H1 (cell line): ENCODE measurements at regions of chr15 and their contacts with region 1.

Region 1: DNA sequence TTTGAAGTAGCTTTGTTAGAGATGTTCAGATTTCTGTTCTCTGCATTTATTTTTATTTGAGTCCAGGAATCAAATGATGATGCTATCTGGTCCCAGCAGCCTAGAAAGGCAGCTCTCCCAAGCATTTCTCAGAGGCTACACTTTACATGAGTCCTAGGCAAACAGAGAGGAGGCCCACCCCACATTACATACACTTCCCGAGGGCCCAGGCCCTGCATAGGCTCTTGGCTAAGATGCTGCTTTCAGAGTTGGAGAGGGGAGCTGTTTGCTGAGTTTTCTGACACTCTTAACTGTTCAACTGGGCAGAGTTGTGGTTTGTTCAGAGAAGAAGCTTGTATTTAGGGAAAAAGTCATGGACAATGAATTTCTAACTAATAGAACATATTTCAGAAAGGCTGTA is 117.9 kb upstream of the RGMA start:
- DNase-seq: peak in 1 of 2 experiments; percentile 16
- H3K4me3 ChIP-seq: no peak overlapping the region
- H3K27ac ChIP-seq: no peak overlapping the region
- H3K4me1 ChIP-seq: peaks cover 0 to 4% (median 0%) of the 10 kb centered on the region in 4 experiments; a peak in 2 of 7 replicates
- H3K27me3 ChIP-seq: no peaks in the 10 kb centered on the region; a peak in 1 of 7 replicates
- CTCF ChIP-seq: no peak
- EP300 ChIP-seq: no peak
- POLR2A ChIP-seq: no peak
- RAD21 ChIP-seq: no peak

Region 2: DNA sequence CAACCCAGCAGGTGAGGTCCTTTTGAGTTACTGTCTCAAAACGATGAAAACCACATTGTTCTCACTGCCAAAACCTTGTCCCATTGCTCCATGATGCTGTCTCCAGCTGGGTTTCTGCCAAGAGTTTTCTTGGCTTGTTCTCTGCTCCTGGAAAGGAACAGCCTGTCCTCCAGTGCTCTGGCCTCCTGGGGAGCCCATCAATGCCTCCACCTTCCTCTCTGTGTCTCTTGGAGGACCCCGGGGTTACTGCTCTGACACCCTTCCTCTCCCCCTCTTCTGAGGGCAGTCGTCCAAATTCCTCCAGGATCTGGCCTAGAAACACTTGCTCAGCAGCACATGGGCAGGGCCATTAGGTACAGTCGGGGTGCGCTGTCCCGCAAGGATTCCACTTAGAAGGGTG is 53.9 kb before region 1 on chr15:
- CTCF ChIA-PET with region 1: no interaction called
- POLR2A ChIA-PET with region 1: no interaction called
- DNase-seq: no peak
- H3K4me3 ChIP-seq: no peak overlapping the region
- H3K27ac ChIP-seq: no peak overlapping the region
- H3K4me1 ChIP-seq: peaks cover 4 to 13% (median 8%) of the 10 kb centered on the region in 4 experiments; a peak in 5 of 7 replicates
- H3K27me3 ChIP-seq: no peaks in the 10 kb centered on the region
- CTCF ChIP-seq: no peak
- EP300 ChIP-seq: no peak
- POLR2A ChIP-seq: no peak
- RAD21 ChIP-seq: 0 out of 4 replicates have a peak, but pooled peaks of 1 of the 2 experiments have one; percentile 7

Region 3: GRCh38 chr15:93189561-93189960 is 17.3 kb before region 1 on chr15:
- CTCF ChIA-PET with region 1: no interaction called
- POLR2A ChIA-PET with region 1: no interaction called
- DNase-seq: no peak
- H3K4me3 ChIP-seq: peak overlapping the region in 1 of 4 experiments; percentile 37; a peak in 2 of 8 replicates
- H3K27ac ChIP-seq: no peak overlapping the region
- H3K4me1 ChIP-seq: peaks cover 0 to 14% (median 7%) of the 10 kb centered on the region in 4 experiments; a peak in 5 of 7 replicates
- H3K27me3 ChIP-seq: 0 out of 7 replicates have a peak, but pooled peaks cover 0 to 2% (median 0%) of the 10 kb centered on the region in 4 experiments
- CTCF ChIP-seq: no peak
- EP300 ChIP-seq: no peak
- POLR2A ChIP-seq: no peak
- RAD21 ChIP-seq: no peak

Region 4: GRCh38 chr15:93221759-93222158 is 14.9 kb after region 1 on chr15:
- CTCF ChIA-PET with region 1: interaction called, 10 read pairs
- POLR2A ChIA-PET with region 1: no interaction called
- DNase-seq: peak in 1 of 2 experiments; percentile 43
- H3K4me3 ChIP-seq: no peak overlapping the region
- H3K27ac ChIP-seq: no peak overlapping the region
- H3K4me1 ChIP-seq: no peaks in the 10 kb centered on the region
- H3K27me3 ChIP-seq: no peaks in the 10 kb centered on the region
- CTCF ChIP-seq: peak in 2 of 3 experiments; percentile 33 to 54; a peak in 2 of 4 replicates
- EP300 ChIP-seq: no peak
- POLR2A ChIP-seq: no peak
- RAD21 ChIP-seq: peak; percentile 45 to 59